ENCODE measurements at regions of chr11 and their contacts with region 1.

Region 1: GRCh38 chr11:75547580-75548058 is 14.4 kb upstream of the SERPINH1 start:
- DNase-seq: peak in 1 of 2 experiments; percentile 91
- H3K4me3 ChIP-seq: no peak overlapping the region
- H3K27ac ChIP-seq: no peak overlapping the region
- H3K4me1 ChIP-seq: peaks cover 0 to 4% (median 2%) of the 10 kb centered on the region in 4 experiments; a peak in 5 of 7 replicates
- H3K27me3 ChIP-seq: no peaks in the 10 kb centered on the region; a peak in 1 of 7 replicates
- CTCF ChIP-seq: peak; percentile 72 to 89 (median 82)
- EP300 ChIP-seq: no peak
- POLR2A ChIP-seq: peak in 1 of 2 experiments; percentile 19; a peak in 1 of 3 replicates
- RAD21 ChIP-seq: peak; percentile 89 to 92

Region 2: GRCh38 chr11:75514596-75514995 is 33.0 kb before region 1 on chr11:
- CTCF ChIA-PET with region 1: no interaction called
- POLR2A ChIA-PET with region 1: no interaction called
- DNase-seq: no peak
- H3K4me3 ChIP-seq: no peak overlapping the region
- H3K27ac ChIP-seq: no peak overlapping the region
- H3K4me1 ChIP-seq: peaks cover 0 to 2% (median 0%) of the 10 kb centered on the region in 4 experiments; a peak in 1 of 7 replicates
- H3K27me3 ChIP-seq: no peaks in the 10 kb centered on the region
- CTCF ChIP-seq: no peak
- EP300 ChIP-seq: no peak
- POLR2A ChIP-seq: no peak
- RAD21 ChIP-seq: no peak

Region 3: GRCh38 chr11:75562048-75562835 is 14.6 kb after region 1 on chr11 and contains the start of gene SERPINH1:
- CTCF ChIA-PET with region 1: interaction called, 344 read pairs
- POLR2A ChIA-PET with region 1: interaction called, 1,120 read pairs
- DNase-seq: peak in 1 of 2 experiments; percentile 83
- H3K4me3 ChIP-seq: peak within 1 kb of the TSS; percentile 62 to 93 (median 84)
- H3K27ac ChIP-seq: peak within 1 kb of the TSS; percentile 95
- H3K4me1 ChIP-seq: peaks cover 10 to 57% (median 39%) of the 10 kb centered on the region in 4 experiments
- H3K27me3 ChIP-seq: no peaks in the 10 kb centered on the region
- CTCF ChIP-seq: no peak
- EP300 ChIP-seq: no peak
- POLR2A ChIP-seq: peak; percentile 77 to 86; a peak in 2 of 3 replicates
- RAD21 ChIP-seq: no peak; a peak in 1 of 4 replicates
- total RNA-seq, gene SERPINH1: 420 and 424 TPM in 2 replicates

Region 4: GRCh38 chr11:75570559-75571139 is 23.0 kb after region 1 on chr11:
- CTCF ChIA-PET with region 1: interaction called, 344 read pairs
- POLR2A ChIA-PET with region 1: interaction called, 1,120 read pairs
- DNase-seq: no peak
- H3K4me3 ChIP-seq: no peak overlapping the region
- H3K27ac ChIP-seq: no peak overlapping the region
- H3K4me1 ChIP-seq: peaks cover 0 to 8% (median under 1%) of the 10 kb centered on the region in 4 experiments; a peak in 5 of 7 replicates
- H3K27me3 ChIP-seq: no peaks in the 10 kb centered on the region
- CTCF ChIP-seq: no peak
- EP300 ChIP-seq: no peak
- POLR2A ChIP-seq: peak in 1 of 2 experiments; percentile 23; a peak in 1 of 3 replicates
- RAD21 ChIP-seq: no peak

Region 5: DNA sequence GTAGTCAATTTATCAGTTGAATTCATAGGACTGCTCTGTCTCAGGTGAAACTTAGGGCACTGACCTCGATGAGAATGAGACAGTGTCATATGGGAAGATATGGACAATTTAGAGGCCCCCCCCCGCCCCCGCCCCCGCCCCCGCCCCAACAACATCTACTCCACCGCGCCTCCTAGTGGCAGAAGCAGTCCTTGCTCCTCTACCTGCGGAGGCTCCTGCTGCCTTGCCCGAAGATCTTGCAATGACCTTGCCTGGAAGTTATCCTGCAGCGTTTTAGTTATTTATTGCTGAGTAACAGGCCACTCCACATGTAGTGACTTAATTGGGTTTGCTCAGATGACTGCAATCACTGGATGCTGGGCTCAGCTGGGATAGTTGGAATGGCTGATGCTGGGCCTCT is 29.6 kb after region 1 on chr11:
- CTCF ChIA-PET with region 1: interaction called, 344 read pairs
- POLR2A ChIA-PET with region 1: interaction called, 1,120 read pairs
- DNase-seq: peak in 1 of 2 experiments; percentile 88
- H3K4me3 ChIP-seq: no peak overlapping the region
- H3K27ac ChIP-seq: no peak overlapping the region
- H3K4me1 ChIP-seq: peaks cover 0 to 5% (median 2%) of the 10 kb centered on the region in 4 experiments; a peak in 4 of 7 replicates
- H3K27me3 ChIP-seq: no peaks in the 10 kb centered on the region
- CTCF ChIP-seq: peak; percentile 61 to 80 (median 61)
- EP300 ChIP-seq: no peak
- POLR2A ChIP-seq: no peak
- RAD21 ChIP-seq: peak in 1 of 2 experiments; percentile 40; a peak in 1 of 4 replicates